ENCODE measurements at regions of chrX and their contacts with region 1.

Region 1: GRCh38 chrX:119729408-119730201 is 28.8 kb upstream of the SOWAHD start:
- DNase-seq: peak; percentile 48 to 76 (median 61)
- H3K4me3 ChIP-seq: no peak overlapping the region
- H3K4me3 Mint-ChIP-seq: peak overlapping the region in 2 of 7 donors; percentile 13 to 32
- H3K27ac ChIP-seq: no peak overlapping the region
- H3K27ac Mint-ChIP-seq: peak overlapping the region in 1 of 8 donors; percentile 29
- H3K4me1 ChIP-seq: no peaks in the 10 kb centered on the region
- H3K4me1 Mint-ChIP-seq: peaks cover 9 to 15% (median 13%) of the 10 kb centered on the region in 3 donors
- H3K27me3 ChIP-seq: no peaks in the 10 kb centered on the region
- H3K27me3 Mint-ChIP-seq: peaks cover 0 to 3% of the 10 kb centered on the region in 2 donors

Region 2: DNA sequence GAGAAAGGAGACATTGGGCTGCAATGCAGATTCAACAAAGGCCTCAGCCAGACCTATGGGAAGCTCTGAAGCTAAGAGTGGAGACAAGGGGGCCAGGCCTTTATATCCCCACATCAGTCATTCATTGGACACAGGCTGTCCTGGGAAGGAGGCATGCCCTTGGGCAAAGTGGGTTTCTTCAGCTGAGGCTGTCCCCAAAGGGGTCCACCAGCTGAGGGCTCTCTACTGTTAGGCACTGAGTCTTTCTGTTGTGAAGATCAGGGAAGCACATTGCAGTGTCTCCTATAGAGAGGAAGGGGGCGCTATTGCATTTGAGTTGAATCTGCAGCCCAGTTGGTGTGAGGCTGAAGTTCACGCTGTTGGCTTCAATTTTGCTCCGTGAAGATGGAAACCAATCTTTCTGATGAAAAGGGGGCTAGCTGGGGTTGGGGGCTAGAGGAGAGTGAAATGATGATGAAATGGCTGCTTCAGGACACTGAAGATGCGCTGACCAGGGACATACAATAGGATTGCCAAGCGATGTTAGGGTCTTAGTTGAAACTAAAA is 213.4 kb before region 1 on chrX:
- CTCF ChIA-PET with region 1: interaction called, 24 read pairs
- POLR2A ChIA-PET with region 1: no interaction called
- DNase-seq: peak in 4 of 5 donors; percentile 2 to 60 (median 52)
- H3K4me3 ChIP-seq: no peak overlapping the region
- H3K4me3 Mint-ChIP-seq: no peak overlapping the region
- H3K27ac ChIP-seq: no peak overlapping the region
- H3K27ac Mint-ChIP-seq: peak overlapping the region in 3 of 8 donors; percentile 12 to 75 (median 20)
- H3K4me1 ChIP-seq: no peaks in the 10 kb centered on the region
- H3K4me1 Mint-ChIP-seq: peaks cover 2 to 5% (median 4%) of the 10 kb centered on the region in 3 donors
- H3K27me3 ChIP-seq: no peaks in the 10 kb centered on the region
- H3K27me3 Mint-ChIP-seq: peaks cover 0 to 6% of the 10 kb centered on the region in 2 donors

Region 3: GRCh38 chrX:119606280-119607015 is 123.2 kb before region 1 on chrX and contains the start of gene NKRF:
- CTCF ChIA-PET with region 1: interaction called, 10 read pairs
- POLR2A ChIA-PET with region 1: interaction called, 6 read pairs
- DNase-seq: peak; percentile 82 to 94 (median 87)
- H3K4me3 ChIP-seq: peak within 1 kb of the TSS; percentile 75
- H3K4me3 Mint-ChIP-seq: peak within 1 kb of the TSS; percentile 93 to 98 (median 94)
- H3K27ac ChIP-seq: peak within 1 kb of the TSS; percentile 86
- H3K27ac Mint-ChIP-seq: peak within 1 kb of the TSS; percentile 97 to 99 (median 99)
- H3K4me1 ChIP-seq: peaks cover 6% of the 10 kb centered on the region
- H3K4me1 Mint-ChIP-seq: peaks cover 27 to 51% (median 45%) of the 10 kb centered on the region in 3 donors
- H3K27me3 ChIP-seq: no peaks in the 10 kb centered on the region
- H3K27me3 Mint-ChIP-seq: peaks cover 0 to 3% of the 10 kb centered on the region in 2 donors
- total RNA-seq, gene NKRF: 27.2 to 28.4 TPM

Region 4: GRCh38 chrX:119693040-119693995 is 36.3 kb before region 1 on chrX and contains the start of gene SEPTIN6:
- CTCF ChIA-PET with region 1: interaction called, 12 read pairs
- POLR2A ChIA-PET with region 1: interaction called, 4 read pairs
- DNase-seq: peak; percentile 72 to 92 (median 90)
- H3K4me3 ChIP-seq: peak within 1 kb of the TSS; percentile 78
- H3K4me3 Mint-ChIP-seq: peak within 1 kb of the TSS; percentile 97 to 99 (median 99)
- H3K27ac ChIP-seq: peak within 1 kb of the TSS; percentile 89
- H3K27ac Mint-ChIP-seq: peak within 1 kb of the TSS; percentile 93 to 97 (median 95)
- H3K4me1 ChIP-seq: peaks cover 16% of the 10 kb centered on the region
- H3K4me1 Mint-ChIP-seq: peaks cover 21 to 40% (median 37%) of the 10 kb centered on the region in 3 donors
- H3K27me3 ChIP-seq: no peaks in the 10 kb centered on the region
- H3K27me3 Mint-ChIP-seq: peaks cover 0 to 3% of the 10 kb centered on the region in 2 donors
- total RNA-seq, gene SEPTIN6: 122 to 125 TPM

Region 5: DNA sequence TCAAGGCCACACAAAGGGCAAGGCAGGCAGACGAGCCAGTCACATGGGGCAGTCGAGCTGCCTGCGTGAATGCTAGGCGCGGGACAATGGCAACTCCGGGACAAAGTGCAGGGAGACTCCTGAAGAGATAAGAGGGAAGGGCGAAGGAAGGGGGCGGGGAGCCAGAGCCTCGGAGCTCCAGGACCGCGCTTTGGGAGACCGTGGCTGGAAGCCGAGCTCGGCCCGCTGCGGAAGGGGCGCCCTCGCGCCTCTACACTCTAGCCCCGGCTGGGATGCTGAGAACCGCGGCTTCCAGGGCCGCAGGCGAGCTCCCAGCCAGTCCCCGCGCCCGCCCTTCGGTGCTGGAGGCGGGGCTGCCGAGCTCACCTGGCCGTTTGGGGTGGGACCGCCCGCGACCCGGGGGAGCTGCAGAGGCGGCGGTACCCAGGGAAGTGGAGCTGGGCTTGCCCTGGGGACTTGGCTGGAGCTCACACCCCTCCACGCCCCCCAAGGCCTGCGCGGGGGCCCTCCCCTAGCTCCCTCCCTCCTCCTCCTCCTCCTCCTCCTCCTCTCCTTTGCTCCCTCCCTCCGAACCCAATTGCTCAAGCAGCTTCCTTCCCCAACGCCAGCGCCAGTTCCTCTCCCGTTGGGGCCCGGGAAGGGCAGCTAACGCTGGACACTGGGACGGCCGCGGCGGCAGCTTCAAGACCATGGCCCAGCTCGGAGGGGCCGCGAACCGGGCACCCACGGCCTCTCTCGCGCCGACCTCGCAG is 28.6 kb after region 1 on chrX and contains the start of gene SOWAHD:
- CTCF ChIA-PET with region 1: interaction called, 10 read pairs
- POLR2A ChIA-PET with region 1: interaction called, 3 read pairs
- DNase-seq: peak; percentile 21 to 57 (median 31)
- H3K4me3 ChIP-seq: peak within 1 kb of the TSS; percentile 47
- H3K4me3 Mint-ChIP-seq: peak within 1 kb of the TSS; percentile 69 to 85 (median 75)
- H3K27ac ChIP-seq: no peak within 1 kb of the TSS
- H3K27ac Mint-ChIP-seq: peak within 1 kb of the TSS; percentile 90 to 98 (median 94)
- H3K4me1 ChIP-seq: peaks cover 43% of the 10 kb centered on the region
- H3K4me1 Mint-ChIP-seq: peaks cover 43 to 64% (median 44%) of the 10 kb centered on the region in 3 donors
- H3K27me3 ChIP-seq: no peaks in the 10 kb centered on the region
- H3K27me3 Mint-ChIP-seq: peaks cover 0 to 2% of the 10 kb centered on the region in 2 donors
- total RNA-seq, gene SOWAHD: 0.33 to 0.55 TPM

Region 6: GRCh38 chrX:119970574-119970973 is 241.0 kb after region 1 on chrX:
- CTCF ChIA-PET with region 1: no interaction called
- POLR2A ChIA-PET with region 1: no interaction called
- DNase-seq: no peak
- H3K4me3 ChIP-seq: no peak overlapping the region
- H3K4me3 Mint-ChIP-seq: no peak overlapping the region
- H3K27ac ChIP-seq: no peak overlapping the region
- H3K27ac Mint-ChIP-seq: no peak overlapping the region
- H3K4me1 ChIP-seq: no peaks in the 10 kb centered on the region
- H3K4me1 Mint-ChIP-seq: no peaks in the 10 kb centered on the region
- H3K27me3 ChIP-seq: no peaks in the 10 kb centered on the region
- H3K27me3 Mint-ChIP-seq: no peaks in the 10 kb centered on the region

Measured in CD8-positive, alpha-beta memory T cell (primary cell).